ENCODE measurements at regions of chr4 and their contacts with region 1.

Region 1: DNA sequence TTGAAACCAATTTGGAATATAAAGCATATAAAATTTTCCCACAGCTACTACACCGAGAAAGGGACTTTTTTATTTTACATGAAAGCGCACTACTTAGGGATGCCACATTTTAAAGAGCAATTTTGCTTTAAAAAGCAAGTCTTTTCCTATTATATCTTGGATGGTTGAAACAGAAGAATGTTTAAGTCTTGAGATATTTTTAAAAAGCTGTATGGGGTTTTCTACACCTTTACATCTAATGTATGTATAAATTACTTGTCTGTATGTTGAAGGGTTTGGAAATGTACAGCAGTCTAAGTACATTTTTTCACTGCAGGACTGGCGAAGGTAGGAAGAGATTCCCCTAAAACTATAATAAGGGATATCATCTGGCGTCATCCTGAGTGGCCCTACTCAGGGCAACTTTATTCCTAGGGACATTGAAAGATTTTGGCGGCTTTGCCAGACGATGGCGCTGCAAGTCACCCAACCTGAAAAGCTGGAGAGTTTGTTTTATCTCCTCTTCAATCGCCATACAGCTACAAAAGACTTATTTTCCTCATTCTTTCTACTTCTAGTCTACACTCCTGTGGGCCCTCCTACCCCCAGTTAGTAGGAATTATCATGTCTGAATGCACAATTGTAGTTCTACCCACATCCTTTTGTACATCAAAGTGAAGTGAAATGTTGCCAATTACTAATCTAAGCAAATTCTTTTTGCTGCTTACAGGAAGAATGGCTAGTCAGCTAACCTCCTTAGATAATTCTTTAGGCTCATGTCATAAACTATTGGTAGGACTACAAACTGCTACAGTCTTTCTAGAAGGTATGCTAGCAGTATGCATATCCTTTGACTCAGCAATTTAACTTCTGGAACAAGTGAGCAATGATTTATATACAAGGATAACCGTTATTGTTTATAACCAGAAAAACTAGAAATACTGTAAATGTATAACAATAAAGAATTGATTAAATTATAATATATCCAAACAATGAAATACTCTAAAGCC is 782 bp upstream of the NEK1 start:
- DNase-seq: peak; percentile 45 to 84 (median 64)
- ATAC-seq: peak; percentile 25 to 46 (median 40)
- H3K4me3 ChIP-seq: peak overlapping the region; percentile 47 to 94
- H3K4me3 Mint-ChIP-seq: peak overlapping the region; percentile 92 to 98 (median 93)
- H3K27ac ChIP-seq: peak overlapping the region; percentile 99
- H3K27ac Mint-ChIP-seq: peak overlapping the region; percentile 99
- H3K4me1 ChIP-seq: peaks cover 19 to 22% of the 10 kb centered on the region in 2 experiments
- H3K4me1 Mint-ChIP-seq: peaks cover 44 to 58% (median 46%) of the 10 kb centered on the region in 3 donors
- H3K27me3 ChIP-seq: no peaks in the 10 kb centered on the region
- H3K27me3 Mint-ChIP-seq: no peaks in the 10 kb centered on the region

Region 2: DNA sequence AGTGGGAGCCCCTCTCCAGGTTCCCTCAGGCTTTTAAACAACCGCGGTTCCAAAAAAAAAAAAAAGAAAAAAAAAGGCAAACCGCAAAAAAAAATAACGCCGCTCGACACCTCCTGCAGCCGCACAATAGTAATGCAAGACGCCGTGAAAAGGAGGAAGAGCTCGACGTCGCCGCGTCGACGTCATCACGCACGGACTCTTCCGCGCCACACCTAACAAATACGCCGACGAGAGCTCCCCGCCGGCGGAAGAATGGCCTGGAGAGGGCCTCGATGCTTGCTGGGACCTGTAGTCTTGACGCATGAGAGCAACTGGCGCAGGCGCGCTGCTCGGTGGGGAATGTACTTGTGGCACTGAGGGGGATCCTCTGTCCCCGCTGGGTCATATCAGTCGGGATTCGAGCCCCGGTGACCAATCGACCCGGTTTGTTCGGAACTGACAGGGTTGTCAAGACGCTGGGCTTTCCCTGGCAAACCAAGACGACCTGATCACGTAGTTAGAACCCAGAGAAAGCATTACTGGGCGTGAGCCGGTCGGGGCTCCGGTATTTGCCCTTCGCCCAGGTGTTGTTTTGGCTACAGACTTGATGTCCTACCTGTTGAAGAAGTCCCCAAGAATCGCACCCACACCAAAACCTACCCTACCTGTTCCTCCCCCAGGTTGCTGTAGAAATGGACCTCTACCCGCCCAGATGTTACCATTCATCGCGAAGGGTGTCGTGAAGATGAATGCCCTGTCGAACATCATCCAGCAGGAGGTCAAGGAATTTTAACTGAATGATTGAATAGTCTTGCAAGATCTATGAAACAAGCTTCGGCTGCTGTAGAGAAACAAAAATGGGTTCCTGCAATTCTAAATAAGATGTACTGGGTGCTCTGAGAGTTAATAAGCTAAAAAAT is 602.8 kb before region 1 on chr4 and contains the start of gene CBR4:
- CTCF ChIA-PET with region 1: interaction called in 1 of 2 experiments, 15 read pairs
- POLR2A ChIA-PET with region 1: interaction called in 1 of 2 experiments, 4 read pairs
- DNase-seq: peak; percentile 88 to 99 (median 96)
- ATAC-seq: peak; percentile 95 to 97 (median 97)
- H3K4me3 ChIP-seq: peak within 1 kb of the TSS; percentile 69 to 94
- H3K4me3 Mint-ChIP-seq: peak within 1 kb of the TSS; percentile 89 to 97 (median 91)
- H3K27ac ChIP-seq: peak within 1 kb of the TSS; percentile 86
- H3K27ac Mint-ChIP-seq: peak within 1 kb of the TSS; percentile 91 to 94
- H3K4me1 ChIP-seq: peaks cover 15% of the 10 kb centered on the region in 2 experiments
- H3K4me1 Mint-ChIP-seq: peaks cover 36 to 54% (median 40%) of the 10 kb centered on the region in 3 donors
- H3K27me3 ChIP-seq: no peaks in the 10 kb centered on the region
- H3K27me3 Mint-ChIP-seq: no peaks in the 10 kb centered on the region
- total RNA-seq, gene CBR4: 13.8 to 24.3 (median 18.0) TPM

Region 3: DNA sequence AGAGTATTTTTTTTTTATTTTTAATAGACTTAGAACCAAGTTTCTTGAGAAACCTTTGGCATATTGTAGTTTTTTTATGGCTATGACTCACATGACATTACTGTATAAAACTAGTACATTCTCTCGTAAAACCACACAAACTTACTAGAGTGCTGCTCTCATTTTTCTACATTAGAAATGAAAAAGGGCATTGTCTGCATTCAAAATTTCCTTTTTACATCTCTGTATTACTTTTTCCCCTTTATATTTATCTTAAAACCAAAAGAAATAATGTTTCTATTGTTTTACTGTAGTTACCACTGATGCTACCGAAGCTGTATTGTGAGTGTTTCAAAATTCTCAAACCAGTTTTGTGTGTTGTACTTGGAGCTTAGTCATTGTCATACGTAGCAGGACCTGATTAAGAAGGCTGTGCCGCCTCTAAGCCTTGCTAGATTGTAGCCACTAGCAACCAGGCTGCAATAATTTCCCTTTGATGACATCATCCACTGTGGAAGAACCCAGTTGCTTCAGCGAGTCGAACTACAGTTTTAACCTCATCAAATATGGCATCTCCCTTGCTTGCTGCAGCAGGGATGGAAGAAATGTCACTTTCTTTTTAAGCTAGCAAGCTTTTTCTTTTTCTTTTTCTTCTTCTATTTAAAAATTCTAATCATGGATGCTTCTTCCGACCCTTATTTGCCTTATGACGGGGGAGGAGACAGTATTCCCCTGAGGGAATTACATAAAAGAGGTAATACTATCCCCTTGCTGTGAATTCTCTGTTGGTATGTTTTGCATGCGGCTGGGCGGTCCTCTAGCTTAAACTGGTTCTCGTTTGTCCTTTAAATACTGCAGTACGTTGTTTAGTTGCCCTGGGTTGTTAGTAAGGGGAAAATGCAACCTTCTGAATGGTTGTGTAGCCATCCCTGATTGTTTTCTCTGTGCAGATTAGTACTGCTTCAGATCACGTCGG is 46.8 kb after region 1 on chr4:
- CTCF ChIA-PET with region 1: interaction called, 3 to 13 read pairs
- POLR2A ChIA-PET with region 1: interaction called, 11 to 22 read pairs
- DNase-seq: peak in 34 of 35 experiments; percentile 22 to 87 (median 59)
- ATAC-seq: peak; percentile 99 to 100 (median 99)
- H3K4me3 ChIP-seq: peak overlapping the region; percentile 4 to 16
- H3K4me3 Mint-ChIP-seq: peak overlapping the region; percentile 62 to 75 (median 74)
- H3K27ac ChIP-seq: peak overlapping the region; percentile 65
- H3K27ac Mint-ChIP-seq: peak overlapping the region; percentile 88 to 91
- H3K4me1 ChIP-seq: peaks cover 0 to 2% of the 10 kb centered on the region in 2 experiments
- H3K4me1 Mint-ChIP-seq: peaks cover 44 to 47% (median 45%) of the 10 kb centered on the region in 3 donors
- H3K27me3 ChIP-seq: no peaks in the 10 kb centered on the region
- H3K27me3 Mint-ChIP-seq: no peaks in the 10 kb centered on the region

Region 4: DNA sequence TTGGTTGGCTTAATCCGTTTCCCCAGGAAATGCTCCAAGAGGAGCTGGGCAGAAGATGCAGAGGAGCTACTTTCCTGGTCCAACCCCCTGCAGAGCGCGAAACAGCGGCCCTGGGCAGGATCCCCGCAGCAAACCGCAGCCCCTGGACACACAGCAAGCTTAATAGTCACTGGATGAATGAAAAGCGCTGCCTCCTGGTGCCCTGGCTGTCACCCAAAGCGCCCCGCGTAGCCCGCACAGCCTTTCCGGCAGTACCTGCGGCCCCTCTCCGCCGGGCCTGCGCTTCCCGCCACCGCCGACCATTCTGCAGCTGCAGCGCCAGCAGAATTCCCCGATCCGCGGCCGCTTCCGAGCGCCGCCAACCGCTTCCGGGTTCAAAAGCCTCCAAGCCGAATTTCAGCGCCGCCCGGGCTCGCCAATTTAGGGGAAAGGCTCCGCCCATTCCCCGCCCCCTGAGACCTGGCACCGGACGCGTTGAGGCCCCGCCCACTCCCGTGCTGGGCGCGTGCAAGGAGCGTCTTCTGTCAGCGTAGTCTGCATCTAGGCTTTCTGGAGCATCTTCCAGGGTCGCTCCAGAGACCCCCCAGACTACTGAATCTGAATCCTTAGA is 144.5 kb after region 1 on chr4 and contains the start of gene HPF1:
- CTCF ChIA-PET with region 1: interaction called in 1 of 2 experiments, 10 read pairs
- POLR2A ChIA-PET with region 1: interaction called in 1 of 2 experiments, 6 read pairs
- DNase-seq: peak; percentile 82 to 98 (median 90)
- ATAC-seq: peak; percentile 97 to 98 (median 98)
- H3K4me3 ChIP-seq: peak within 1 kb of the TSS; percentile 81 to 99
- H3K4me3 Mint-ChIP-seq: peak within 1 kb of the TSS; percentile 90 to 94 (median 92)
- H3K27ac ChIP-seq: no peak within 1 kb of the TSS
- H3K27ac Mint-ChIP-seq: peak within 1 kb of the TSS in 1 of 2 donors; percentile 50
- H3K4me1 ChIP-seq: peaks cover 9 to 10% of the 10 kb centered on the region in 2 experiments
- H3K4me1 Mint-ChIP-seq: peaks cover 26 to 43% (median 28%) of the 10 kb centered on the region in 3 donors
- H3K27me3 ChIP-seq: peaks cover 0 to 3% of the 10 kb centered on the region in 2 experiments
- H3K27me3 Mint-ChIP-seq: no peaks in the 10 kb centered on the region
- total RNA-seq, gene HPF1: 6.5 to 14.0 (median 13.0) TPM

Region 5: DNA sequence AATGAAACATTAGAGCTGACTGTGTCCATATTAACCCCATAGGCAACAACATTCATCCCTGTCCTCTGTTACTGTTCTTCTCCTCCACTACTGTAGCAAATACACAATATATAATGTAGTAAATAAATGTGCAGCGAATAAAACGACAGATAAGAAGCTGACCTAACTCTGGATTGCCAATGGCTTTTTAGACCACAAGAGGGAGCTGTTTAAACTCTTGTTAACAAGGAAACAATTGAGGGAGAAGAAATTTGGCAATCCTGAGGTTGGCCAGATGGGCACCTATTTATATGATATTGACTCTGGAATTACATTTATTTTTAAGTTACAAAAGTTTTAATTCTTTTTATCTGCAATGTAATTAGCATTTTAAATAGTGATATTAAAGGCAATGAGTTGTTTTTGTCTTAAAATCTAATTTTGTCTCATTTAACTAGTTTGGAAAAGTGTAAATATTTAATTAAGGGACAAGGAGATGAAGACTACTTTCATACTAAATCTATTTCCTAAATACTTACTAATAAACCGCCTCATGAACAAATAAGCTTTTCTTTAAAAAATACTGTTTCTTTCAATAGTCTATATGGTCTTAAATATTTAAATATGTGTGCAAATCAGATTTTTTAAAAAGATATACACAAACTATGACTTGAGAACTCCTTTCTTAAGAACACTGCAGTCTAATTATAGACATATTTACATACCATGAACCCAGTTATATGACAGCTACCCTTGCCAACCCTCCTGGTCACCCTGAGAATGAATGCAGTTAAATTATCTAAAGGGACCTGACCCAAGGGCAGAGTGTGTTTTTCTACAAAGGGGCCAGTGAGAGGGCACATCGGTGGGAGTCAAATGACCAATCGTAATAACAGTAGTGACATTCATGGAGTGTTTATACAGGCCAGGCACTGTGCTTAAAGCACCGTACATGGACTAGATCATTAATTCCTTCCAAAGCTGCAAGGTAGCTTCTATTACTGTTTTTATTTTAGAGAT is 197.5 kb after region 1 on chr4:
- CTCF ChIA-PET with region 1: interaction called, 6 to 29 read pairs
- POLR2A ChIA-PET with region 1: no interaction called
- DNase-seq: peak in 5 of 35 experiments; percentile 12 to 71 (median 17)
- ATAC-seq: no peak
- H3K4me3 ChIP-seq: no peak overlapping the region
- H3K4me3 Mint-ChIP-seq: no peak overlapping the region
- H3K27ac ChIP-seq: no peak overlapping the region
- H3K27ac Mint-ChIP-seq: no peak overlapping the region
- H3K4me1 ChIP-seq: no peaks in the 10 kb centered on the region
- H3K4me1 Mint-ChIP-seq: no peaks in the 10 kb centered on the region
- H3K27me3 ChIP-seq: peaks cover 0 to 3% of the 10 kb centered on the region in 2 experiments
- H3K27me3 Mint-ChIP-seq: peaks cover 5 to 9% of the 10 kb centered on the region in 2 donors